Activated CD8-positive, alpha-beta T cell treated with anti-CD3 and anti-CD28 coated beads, Interleukin-2, amount 10 ng/mL, durations not matched to agents 7 days and 5 days (primary cell): ENCODE measurements at regions of chr10 and their contacts with region 1.

Region 1: GRCh38 chr10:73495884-73496674 is at the start of gene PPP3CB:
- DNase-seq: peak; percentile 95
- ATAC-seq: peak; percentile 85
- H3K4me3 Mint-ChIP-seq: peak within 1 kb of the TSS; percentile 94
- H3K27ac Mint-ChIP-seq: peak within 1 kb of the TSS; percentile 96
- H3K4me1 Mint-ChIP-seq: peaks cover 50% of the 10 kb centered on the region
- H3K27me3 Mint-ChIP-seq: no peaks in the 10 kb centered on the region
- total RNA-seq, gene PPP3CB: 38.9 to 41.3 TPM

Region 2: DNA sequence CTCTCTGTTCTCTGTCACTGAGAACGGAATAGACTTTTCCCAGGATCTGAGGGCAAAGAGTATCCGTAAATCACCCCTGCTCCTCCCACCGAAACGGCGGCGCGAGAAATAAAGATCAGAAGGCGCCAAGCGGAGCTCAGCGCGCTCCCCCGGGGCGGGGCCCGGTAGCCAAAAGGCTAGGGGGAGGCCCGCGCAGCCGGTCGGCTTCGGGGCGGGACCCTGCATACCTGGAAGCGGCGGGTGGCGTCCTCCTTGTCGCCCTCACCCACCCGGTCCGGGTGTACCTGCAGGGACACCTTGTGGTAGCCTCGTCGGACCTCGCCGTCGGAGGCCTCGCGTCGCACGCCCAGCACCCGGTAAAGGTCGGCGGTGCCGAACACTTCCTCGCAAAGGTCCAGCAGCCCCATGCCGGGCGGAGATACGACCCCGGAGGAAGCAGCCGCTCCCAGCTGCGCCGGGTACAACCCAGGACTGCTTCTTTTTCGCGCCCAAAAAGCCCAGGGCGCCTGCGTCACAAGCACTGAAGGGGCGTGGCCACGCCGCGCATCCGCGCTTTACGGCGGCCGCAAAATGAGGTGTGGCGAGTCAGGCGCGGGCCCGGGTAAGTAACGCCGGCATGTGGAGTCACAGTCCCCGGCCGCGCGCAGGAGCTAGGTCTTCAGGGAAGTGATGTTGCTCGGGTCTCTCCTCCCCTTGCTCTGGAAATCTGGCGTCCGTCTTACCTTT is 249.1 kb before region 1 on chr10 and contains the start of gene DNAJC9:
- CTCF ChIA-PET with region 1: interaction called, 4 read pairs
- POLR2A ChIA-PET with region 1: interaction called, 14 read pairs
- DNase-seq: peak; percentile 98
- ATAC-seq: peak; percentile 95
- H3K4me3 Mint-ChIP-seq: peak within 1 kb of the TSS; percentile 100
- H3K27ac Mint-ChIP-seq: peak within 1 kb of the TSS; percentile 98
- H3K4me1 Mint-ChIP-seq: peaks cover 64% of the 10 kb centered on the region
- H3K27me3 Mint-ChIP-seq: no peaks in the 10 kb centered on the region
- total RNA-seq, gene DNAJC9: 70.7 to 71.6 TPM

Region 3: GRCh38 chr10:73252445-73253224 is 243.4 kb before region 1 on chr10 and contains the start of gene MRPS16:
- CTCF ChIA-PET with region 1: interaction called, 4 read pairs
- POLR2A ChIA-PET with region 1: interaction called, 14 read pairs
- DNase-seq: peak; percentile 96
- ATAC-seq: peak; percentile 83
- H3K4me3 Mint-ChIP-seq: peak within 1 kb of the TSS; percentile 99
- H3K27ac Mint-ChIP-seq: peak within 1 kb of the TSS; percentile 91
- H3K4me1 Mint-ChIP-seq: peaks cover 37% of the 10 kb centered on the region
- H3K27me3 Mint-ChIP-seq: no peaks in the 10 kb centered on the region
- total RNA-seq, gene MRPS16: 97.5 to 103 TPM

Region 4: DNA sequence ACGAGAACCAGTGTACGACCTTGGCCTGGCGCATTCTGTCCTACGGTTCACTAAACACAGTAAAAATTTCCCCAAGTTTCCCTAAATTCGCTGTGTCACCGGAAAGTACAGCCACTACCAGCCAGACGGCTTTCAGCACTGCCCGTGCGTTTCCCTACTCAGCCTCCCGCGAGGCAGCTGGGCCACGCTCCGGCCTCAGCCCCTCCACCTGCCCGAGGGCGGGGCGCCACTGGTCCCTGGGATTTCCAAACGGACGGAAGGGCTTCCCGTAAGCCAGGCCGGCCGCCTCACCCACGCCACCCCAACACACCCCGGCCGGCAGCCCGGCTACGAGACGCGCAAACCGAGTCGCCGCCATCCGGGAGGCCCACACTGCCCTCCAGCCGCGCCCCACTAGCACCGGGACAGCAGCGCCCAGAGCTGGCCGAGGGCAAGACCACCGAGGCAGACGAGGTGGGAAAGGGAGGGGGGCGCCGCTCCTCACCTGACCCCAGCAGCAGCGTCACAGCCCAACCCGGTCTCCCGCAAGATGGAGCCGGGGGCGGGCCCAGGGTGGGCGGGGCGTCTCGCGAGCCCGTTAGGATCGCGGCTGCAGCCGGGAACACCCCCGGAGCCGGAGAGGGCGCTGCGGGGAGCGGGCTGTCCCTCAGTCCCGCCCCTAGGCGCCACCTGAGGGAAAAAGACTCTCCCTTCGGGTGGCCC is 82.4 kb before region 1 on chr10 and contains the start of gene ANXA7:
- CTCF ChIA-PET with region 1: no interaction called
- POLR2A ChIA-PET with region 1: interaction called, 16 read pairs
- DNase-seq: peak; percentile 96
- ATAC-seq: peak; percentile 97
- H3K4me3 Mint-ChIP-seq: peak within 1 kb of the TSS; percentile 80
- H3K27ac Mint-ChIP-seq: peak within 1 kb of the TSS; percentile 81
- H3K4me1 Mint-ChIP-seq: peaks cover 49% of the 10 kb centered on the region
- H3K27me3 Mint-ChIP-seq: peaks cover 3% of the 10 kb centered on the region
- total RNA-seq, gene ANXA7: 85.0 to 87.1 TPM

Region 5: GRCh38 chr10:73478636-73479035 is 17.4 kb before region 1 on chr10:
- CTCF ChIA-PET with region 1: no interaction called
- POLR2A ChIA-PET with region 1: interaction called, 10 read pairs
- DNase-seq: no peak
- ATAC-seq: no peak
- H3K4me3 Mint-ChIP-seq: no peak overlapping the region
- H3K27ac Mint-ChIP-seq: no peak overlapping the region
- H3K4me1 Mint-ChIP-seq: peaks cover 9% of the 10 kb centered on the region
- H3K27me3 Mint-ChIP-seq: no peaks in the 10 kb centered on the region

Region 6: DNA sequence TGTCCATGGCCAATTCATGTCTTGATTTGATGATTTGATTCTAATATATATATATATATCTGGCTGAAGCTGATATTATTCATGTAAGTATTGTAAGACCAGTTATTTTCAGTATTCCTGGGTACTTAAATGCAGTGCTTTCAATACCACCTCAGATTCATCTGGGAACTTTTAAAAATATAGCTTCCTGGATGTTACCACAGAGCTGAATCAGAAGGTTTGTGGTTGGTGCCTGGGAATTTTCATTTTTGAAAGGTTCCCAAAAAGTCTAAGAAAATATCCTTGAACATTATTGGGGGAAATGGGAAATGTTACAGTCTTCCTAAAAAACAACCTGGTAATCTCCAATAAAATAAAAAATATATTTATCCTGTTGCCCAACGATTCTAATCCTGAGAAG is 10.4 kb after region 1 on chr10:
- CTCF ChIA-PET with region 1: interaction called, 4 read pairs
- POLR2A ChIA-PET with region 1: interaction called, 13 read pairs
- DNase-seq: no peak
- ATAC-seq: no peak
- H3K4me3 Mint-ChIP-seq: no peak overlapping the region
- H3K27ac Mint-ChIP-seq: no peak overlapping the region
- H3K4me1 Mint-ChIP-seq: peaks cover 10% of the 10 kb centered on the region
- H3K27me3 Mint-ChIP-seq: no peaks in the 10 kb centered on the region

Region 7: DNA sequence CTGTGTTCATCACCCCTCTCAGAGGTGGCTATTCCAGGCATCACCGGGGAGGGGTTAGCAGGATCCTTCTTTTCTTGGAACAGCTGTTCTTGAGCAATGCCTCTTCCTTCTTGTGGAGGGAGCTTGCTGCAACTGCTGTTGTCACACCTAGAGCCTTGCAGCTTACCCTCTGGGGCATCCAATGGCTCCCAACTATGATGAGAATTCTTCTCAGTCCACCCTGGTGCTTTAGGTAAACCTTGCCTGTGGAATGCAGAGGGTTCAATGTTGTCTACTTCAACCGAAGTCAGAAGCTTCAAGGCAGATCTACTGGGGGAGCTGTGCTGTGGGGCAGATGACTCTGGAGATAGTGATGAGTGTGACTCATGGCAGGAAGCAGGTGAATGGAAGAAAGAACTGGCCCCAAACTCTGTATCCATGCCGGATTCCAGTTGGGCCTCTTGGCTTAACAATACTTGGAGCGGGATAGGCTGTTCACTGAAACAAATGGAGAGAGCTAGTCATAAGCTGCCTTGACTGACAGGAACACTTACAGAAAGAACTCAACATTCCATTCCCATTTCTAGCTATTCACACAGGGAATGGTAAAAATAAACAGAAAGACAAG is 21.3 kb after region 1 on chr10:
- CTCF ChIA-PET with region 1: no interaction called
- POLR2A ChIA-PET with region 1: no interaction called
- DNase-seq: no peak
- ATAC-seq: no peak
- H3K4me3 Mint-ChIP-seq: no peak overlapping the region
- H3K27ac Mint-ChIP-seq: no peak overlapping the region
- H3K4me1 Mint-ChIP-seq: no peaks in the 10 kb centered on the region
- H3K27me3 Mint-ChIP-seq: no peaks in the 10 kb centered on the region

Region 8: DNA sequence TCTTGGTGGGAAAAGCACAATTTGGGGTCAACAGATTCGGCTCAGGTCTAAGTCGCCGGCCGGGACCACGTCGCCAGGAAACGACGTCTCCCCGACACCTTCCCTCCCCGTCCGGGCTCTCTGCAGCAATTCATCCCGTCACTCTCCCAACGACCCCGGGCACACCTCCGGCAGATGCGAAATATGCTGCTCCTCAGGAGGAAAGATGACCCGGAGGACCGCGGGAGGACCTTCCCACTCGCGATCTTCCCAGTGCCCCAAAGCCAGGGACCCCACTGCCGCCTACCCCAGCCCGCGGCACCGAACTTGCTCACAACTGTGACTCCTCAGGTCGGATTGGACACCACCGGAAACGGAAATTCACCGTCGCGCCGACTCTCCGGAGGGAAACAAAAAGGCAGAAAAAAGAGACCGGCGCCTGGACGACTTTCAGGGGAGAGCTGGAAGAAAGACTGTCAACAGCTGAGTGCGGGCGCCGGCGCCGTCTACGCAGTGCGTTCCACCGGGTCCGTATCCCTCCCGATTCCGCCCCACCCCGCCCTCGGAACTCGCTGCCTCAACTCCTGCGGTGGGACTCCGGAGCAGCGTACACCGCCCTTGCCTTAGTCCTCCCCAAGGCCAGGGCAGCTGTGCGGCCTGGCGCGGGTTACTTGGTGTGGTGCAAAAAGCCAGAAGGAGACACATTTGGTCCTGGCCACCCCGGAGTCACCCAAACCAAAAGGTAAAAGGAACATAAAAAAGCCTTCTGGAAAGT is 234.3 kb after region 1 on chr10:
- CTCF ChIA-PET with region 1: no interaction called
- POLR2A ChIA-PET with region 1: interaction called, 10 read pairs
- DNase-seq: peak; percentile 94
- ATAC-seq: peak; percentile 93
- H3K4me3 Mint-ChIP-seq: peak overlapping the region; percentile 92
- H3K27ac Mint-ChIP-seq: peak overlapping the region; percentile 97
- H3K4me1 Mint-ChIP-seq: peaks cover 16% of the 10 kb centered on the region
- H3K27me3 Mint-ChIP-seq: no peaks in the 10 kb centered on the region